H1 (cell line): ENCODE measurements at regions of chr3 and their contacts with region 1.

Region 1: GRCh38 chr3:52831500-52832301 is 1.2 kb upstream of the ITIH4 start:
- DNase-seq: no peak
- H3K4me3 ChIP-seq: no peak overlapping the region
- H3K27ac ChIP-seq: no peak overlapping the region; the same call in 1 of the 2 replicates
- H3K4me1 ChIP-seq: peaks cover 0 to 12% (median 2%) of the 10 kb centered on the region in 4 experiments; a peak in 3 of 7 replicates
- H3K27me3 ChIP-seq: no peaks in the 10 kb centered on the region
- CTCF ChIP-seq: no peak
- EP300 ChIP-seq: no peak
- POLR2A ChIP-seq: no peak
- RAD21 ChIP-seq: no peak

Region 2: DNA sequence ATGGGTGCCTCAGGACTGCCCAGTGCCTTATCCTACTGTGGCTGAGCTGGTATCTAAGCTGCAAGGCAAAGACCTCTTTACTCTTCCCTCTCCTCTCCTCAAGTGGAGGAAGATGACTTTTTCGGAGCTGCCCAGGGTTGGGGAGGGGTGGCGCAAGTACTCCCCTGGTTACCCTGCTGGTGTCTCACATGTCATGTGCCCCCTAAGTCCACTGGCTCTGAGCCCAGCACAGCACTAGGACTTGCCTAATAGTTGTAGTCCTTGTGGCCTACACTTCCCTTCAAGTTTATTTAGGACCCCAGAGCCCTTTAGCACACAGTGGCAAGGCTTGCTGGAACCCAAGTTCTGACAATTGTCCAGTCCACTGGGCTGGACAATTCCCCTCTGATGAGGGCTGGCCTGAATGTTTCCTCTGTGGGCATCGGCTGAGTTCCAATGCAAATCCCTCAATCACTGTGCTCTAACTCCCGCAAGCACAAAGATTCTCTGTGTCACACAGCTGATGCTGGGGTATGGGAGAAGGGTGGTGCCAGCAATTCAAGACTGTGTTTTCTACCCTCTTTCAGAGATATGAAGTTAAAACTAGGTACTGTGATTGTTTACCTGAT is 234.9 kb before region 1 on chr3:
- CTCF ChIA-PET with region 1: no interaction called
- POLR2A ChIA-PET with region 1: no interaction called
- DNase-seq: no peak
- H3K4me3 ChIP-seq: no peak overlapping the region
- H3K27ac ChIP-seq: no peak overlapping the region
- H3K4me1 ChIP-seq: no peaks in the 10 kb centered on the region
- H3K27me3 ChIP-seq: no peaks in the 10 kb centered on the region
- CTCF ChIP-seq: no peak
- EP300 ChIP-seq: no peak
- POLR2A ChIP-seq: no peak
- RAD21 ChIP-seq: no peak

Region 3: DNA sequence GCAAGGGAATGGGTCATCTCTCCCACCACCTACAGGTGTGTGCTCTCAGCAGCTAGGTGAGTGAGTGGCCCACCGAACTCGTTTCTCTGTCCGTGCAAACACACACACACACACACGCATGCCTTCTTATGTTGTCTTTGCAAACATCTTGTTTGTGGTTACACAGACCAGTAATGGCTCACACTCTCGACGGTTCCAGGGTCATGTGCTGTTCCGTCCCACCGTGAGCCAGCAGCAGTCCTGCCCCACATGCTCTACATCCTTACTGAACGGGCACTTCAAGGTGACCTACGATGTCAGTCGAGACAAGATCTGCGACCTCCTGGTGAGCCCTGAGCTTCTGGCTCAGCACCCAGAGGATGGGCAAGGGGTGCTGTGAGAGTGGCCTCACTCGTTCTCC is 50.0 kb before region 1 on chr3:
- CTCF ChIA-PET with region 1: no interaction called
- POLR2A ChIA-PET with region 1: no interaction called
- DNase-seq: no peak
- H3K4me3 ChIP-seq: no peak overlapping the region
- H3K27ac ChIP-seq: no peak overlapping the region
- H3K4me1 ChIP-seq: peaks cover 0 to 8% (median 0%) of the 10 kb centered on the region in 4 experiments; a peak in 1 of 7 replicates
- H3K27me3 ChIP-seq: no peaks in the 10 kb centered on the region; a peak in 1 of 7 replicates
- CTCF ChIP-seq: no peak
- EP300 ChIP-seq: no peak
- POLR2A ChIP-seq: no peak
- RAD21 ChIP-seq: no peak

Region 4: GRCh38 chr3:52845691-52846431 is 14.2 kb after region 1 on chr3:
- CTCF ChIA-PET with region 1: interaction called, 46 read pairs
- POLR2A ChIA-PET with region 1: interaction called, 3 read pairs
- DNase-seq: peak in 1 of 2 experiments; percentile 79
- H3K4me3 ChIP-seq: no peak overlapping the region
- H3K27ac ChIP-seq: no peak overlapping the region
- H3K4me1 ChIP-seq: no peaks in the 10 kb centered on the region
- H3K27me3 ChIP-seq: no peaks in the 10 kb centered on the region
- CTCF ChIP-seq: peak; percentile 20 to 61 (median 40); a peak in 3 of 4 replicates
- EP300 ChIP-seq: no peak
- POLR2A ChIP-seq: no peak
- RAD21 ChIP-seq: peak; percentile 15 to 30; a peak in 2 of 4 replicates

Region 5: DNA sequence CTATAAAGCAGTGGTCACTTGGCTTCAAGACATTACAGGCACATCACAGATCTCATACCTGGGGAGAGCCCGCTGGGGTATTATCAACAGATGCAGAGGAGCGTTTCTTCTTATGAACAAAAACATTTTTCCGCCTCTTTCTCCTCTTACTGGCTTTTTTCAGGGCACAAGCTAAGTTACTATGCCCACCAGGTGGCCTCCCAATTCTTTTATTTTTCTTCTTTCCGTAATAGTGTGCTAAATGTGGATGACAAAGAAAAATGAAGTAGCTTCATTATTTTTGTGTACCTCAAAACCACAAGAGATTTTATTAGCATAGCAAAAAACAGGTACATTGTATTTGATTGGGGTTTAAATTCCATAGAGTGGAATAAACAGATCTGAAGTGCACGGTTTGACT is 75.8 kb after region 1 on chr3:
- CTCF ChIA-PET with region 1: no interaction called
- POLR2A ChIA-PET with region 1: no interaction called
- DNase-seq: no peak
- H3K4me3 ChIP-seq: no peak overlapping the region
- H3K27ac ChIP-seq: no peak overlapping the region
- H3K4me1 ChIP-seq: no peaks in the 10 kb centered on the region
- H3K27me3 ChIP-seq: no peaks in the 10 kb centered on the region
- CTCF ChIP-seq: no peak
- EP300 ChIP-seq: no peak
- POLR2A ChIP-seq: no peak
- RAD21 ChIP-seq: no peak